ENCODE measurements at regions of chr2 and their contacts with region 1.

Region 1: DNA sequence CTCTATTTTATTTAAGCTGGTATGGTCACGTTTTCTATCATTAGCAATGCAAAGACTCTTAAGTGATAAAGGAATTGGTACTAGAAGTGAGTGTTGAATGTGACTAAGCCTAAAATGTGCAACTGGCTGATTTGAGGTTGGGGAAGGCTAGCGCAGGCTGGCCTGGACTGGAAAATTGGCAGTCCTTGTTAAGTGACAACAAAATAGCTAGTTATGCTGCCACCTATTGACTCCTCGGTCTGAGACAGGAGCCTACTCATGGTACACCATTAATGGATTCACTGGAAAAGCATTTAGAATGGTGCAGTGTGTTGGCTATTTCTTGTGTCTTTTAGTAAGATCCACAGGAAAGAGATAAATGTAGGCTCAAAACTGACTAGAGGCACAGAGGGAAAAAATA is 5.7 kb upstream of the WIPF1 start:
- DNase-seq: peak; percentile 58 to 81 (median 63)
- H3K4me3 ChIP-seq: no peak overlapping the region
- H3K4me3 Mint-ChIP-seq: peak overlapping the region in 6 of 8 donors; percentile 13 to 62 (median 32)
- H3K27ac ChIP-seq: peak overlapping the region; percentile 11
- H3K27ac Mint-ChIP-seq: peak overlapping the region; percentile 71 to 99 (median 89)
- H3K4me1 ChIP-seq: peaks cover 84% of the 10 kb centered on the region
- H3K4me1 Mint-ChIP-seq: peaks cover 71 to 96% (median 78%) of the 10 kb centered on the region in 4 donors
- H3K27me3 ChIP-seq: no peaks in the 10 kb centered on the region
- H3K27me3 Mint-ChIP-seq: no peaks in the 10 kb centered on the region

Region 2: DNA sequence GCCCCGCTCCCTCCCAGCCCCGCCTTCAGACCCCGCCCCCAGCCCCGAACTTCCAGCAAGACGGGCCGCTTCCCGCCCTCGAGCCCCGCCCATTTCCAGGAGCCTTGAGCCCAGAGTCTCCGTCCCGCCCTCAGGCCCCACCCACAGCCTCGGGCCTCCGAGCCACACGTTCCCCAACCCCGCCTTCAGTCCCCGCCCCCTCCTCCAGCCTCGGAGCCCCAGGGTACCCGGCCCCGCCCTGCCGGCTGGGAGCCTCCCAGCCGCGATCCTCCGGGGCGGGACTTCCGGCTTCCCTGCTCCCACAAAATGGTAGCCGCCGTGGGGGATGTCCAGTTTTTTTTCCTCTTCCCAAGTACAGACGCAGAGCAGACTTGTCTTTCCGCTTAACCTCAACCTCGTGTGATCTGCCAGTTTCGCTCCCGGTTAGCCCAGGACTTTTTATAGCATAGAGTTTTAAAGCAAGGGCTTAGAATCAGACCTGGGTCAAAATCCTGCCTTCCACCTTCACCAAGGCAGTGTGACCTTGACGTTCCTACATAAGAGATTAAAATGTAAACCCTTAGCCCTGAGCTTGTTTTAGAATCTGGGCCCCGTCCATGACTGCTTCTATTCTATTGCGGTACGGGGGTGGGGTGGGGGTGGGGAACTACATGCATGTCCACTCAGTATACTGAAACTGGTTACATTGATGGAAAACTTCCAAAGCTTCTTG is 116.0 kb before region 1 on chr2:
- CTCF ChIA-PET with region 1: interaction called, 20 read pairs
- POLR2A ChIA-PET with region 1: interaction called, 63 read pairs
- intact Hi-C with region 1: no loop called
- DNase-seq: peak; percentile 77 to 94 (median 82)
- H3K4me3 ChIP-seq: peak overlapping the region; percentile 4 to 77
- H3K4me3 Mint-ChIP-seq: peak overlapping the region; percentile 91 to 100 (median 98)
- H3K27ac ChIP-seq: peak overlapping the region; percentile 81
- H3K27ac Mint-ChIP-seq: peak overlapping the region; percentile 91 to 97 (median 94)
- H3K4me1 ChIP-seq: peaks cover 76% of the 10 kb centered on the region
- H3K4me1 Mint-ChIP-seq: peaks cover 48 to 87% (median 64%) of the 10 kb centered on the region in 4 donors
- H3K27me3 ChIP-seq: no peaks in the 10 kb centered on the region
- H3K27me3 Mint-ChIP-seq: no peaks in the 10 kb centered on the region

Region 3: DNA sequence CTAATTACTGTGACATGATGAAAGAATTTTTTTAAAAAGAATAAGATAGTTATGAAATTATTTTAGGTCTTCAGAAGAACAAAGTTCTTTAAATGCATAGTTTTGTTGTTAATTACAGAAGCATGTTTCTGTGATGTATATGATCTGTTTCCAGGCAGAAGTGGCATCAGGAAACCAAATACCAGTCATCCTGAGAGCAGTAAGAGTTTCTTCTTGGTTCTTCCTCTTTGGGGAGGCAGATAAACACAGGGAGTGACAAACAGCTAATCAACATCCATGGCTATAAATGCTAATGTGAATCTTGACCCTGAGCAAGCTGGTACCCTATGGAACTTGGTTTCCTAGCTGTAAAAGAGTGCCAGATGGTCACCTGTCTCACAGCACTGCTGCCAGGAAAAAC is 34.9 kb before region 1 on chr2:
- CTCF ChIA-PET with region 1: interaction called, 430 read pairs
- POLR2A ChIA-PET with region 1: interaction called, 256 read pairs
- intact Hi-C with region 1: loop called (anchors 5 kb)
- DNase-seq: no peak
- H3K4me3 ChIP-seq: no peak overlapping the region
- H3K4me3 Mint-ChIP-seq: no peak overlapping the region
- H3K27ac ChIP-seq: no peak overlapping the region
- H3K27ac Mint-ChIP-seq: peak overlapping the region in 5 of 7 donors; percentile 8 to 77 (median 42)
- H3K4me1 ChIP-seq: peaks cover 27% of the 10 kb centered on the region
- H3K4me1 Mint-ChIP-seq: peaks cover 24 to 51% (median 40%) of the 10 kb centered on the region in 4 donors
- H3K27me3 ChIP-seq: no peaks in the 10 kb centered on the region
- H3K27me3 Mint-ChIP-seq: no peaks in the 10 kb centered on the region

Region 4: GRCh38 chr2:174615871-174616436 is 12.7 kb after region 1 on chr2:
- CTCF ChIA-PET with region 1: interaction called, 12 read pairs
- POLR2A ChIA-PET with region 1: interaction called, 233 read pairs
- intact Hi-C with region 1: loop called (anchors 1 kb)
- DNase-seq: no peak
- H3K4me3 ChIP-seq: no peak overlapping the region
- H3K4me3 Mint-ChIP-seq: peak overlapping the region in 7 of 8 donors; percentile 23 to 74 (median 52)
- H3K27ac ChIP-seq: peak overlapping the region; percentile 38
- H3K27ac Mint-ChIP-seq: peak overlapping the region; percentile 49 to 89 (median 78)
- H3K4me1 ChIP-seq: peaks cover 88% of the 10 kb centered on the region
- H3K4me1 Mint-ChIP-seq: peaks cover 61 to 94% (median 81%) of the 10 kb centered on the region in 4 donors
- H3K27me3 ChIP-seq: no peaks in the 10 kb centered on the region
- H3K27me3 Mint-ChIP-seq: no peaks in the 10 kb centered on the region

Region 5: DNA sequence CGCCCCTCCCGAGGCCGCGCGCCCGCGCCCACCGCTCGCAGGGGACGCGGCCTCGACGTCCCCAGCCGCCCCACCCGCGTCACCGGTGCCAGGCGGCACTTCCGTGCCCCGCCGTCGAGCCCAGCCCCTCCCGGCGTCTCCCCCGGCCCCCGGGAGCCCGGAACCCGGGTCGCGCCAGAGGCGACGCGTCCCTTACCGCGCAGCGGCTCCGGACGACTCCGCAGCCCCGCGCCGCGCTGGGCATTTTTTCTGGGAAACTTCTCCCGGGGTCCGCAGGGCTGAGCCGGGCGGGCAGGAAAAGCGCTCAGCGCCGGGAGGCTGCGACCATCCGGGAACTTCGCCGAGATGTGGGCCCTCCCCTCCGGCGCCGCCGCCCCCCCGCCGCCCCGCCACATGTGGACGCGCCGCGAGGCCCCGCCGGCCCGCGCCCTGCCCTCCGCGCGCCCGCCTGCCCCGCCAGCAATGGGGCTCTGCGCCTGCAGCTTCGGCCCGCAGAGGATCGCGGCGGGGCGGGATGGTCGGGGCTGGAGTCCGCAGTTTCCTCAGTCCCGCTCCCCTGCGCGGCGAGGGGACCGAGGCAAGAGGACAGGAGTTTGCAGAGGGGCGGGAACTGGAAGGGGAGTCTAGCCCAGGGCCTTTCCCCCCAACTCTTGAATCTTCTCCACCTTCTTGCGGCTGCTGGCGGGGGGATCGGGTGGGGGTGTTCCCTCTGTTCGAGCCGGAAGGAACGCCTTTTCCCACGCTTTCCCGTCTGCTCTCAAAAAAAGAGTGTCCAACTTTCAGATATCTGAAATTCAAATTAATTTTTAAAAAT is 79.5 kb after region 1 on chr2:
- CTCF ChIA-PET with region 1: interaction called, 222 read pairs
- POLR2A ChIA-PET with region 1: interaction called, 85 read pairs
- intact Hi-C with region 1: loop called (anchors 1 kb)
- DNase-seq: peak; percentile 66 to 79 (median 73)
- H3K4me3 ChIP-seq: peak overlapping the region; percentile 49 to 69
- H3K4me3 Mint-ChIP-seq: peak overlapping the region; percentile 89 to 97 (median 93)
- H3K27ac ChIP-seq: peak overlapping the region; percentile 84
- H3K27ac Mint-ChIP-seq: peak overlapping the region; percentile 86 to 96 (median 94)
- H3K4me1 ChIP-seq: peaks cover 48% of the 10 kb centered on the region
- H3K4me1 Mint-ChIP-seq: peaks cover 36 to 60% (median 48%) of the 10 kb centered on the region in 4 donors
- H3K27me3 ChIP-seq: no peaks in the 10 kb centered on the region
- H3K27me3 Mint-ChIP-seq: no peaks in the 10 kb centered on the region

Measured in CD4-positive, alpha-beta memory T cell (primary cell).